Right lobe of liver (tissue), 6 donors: ENCODE measurements at regions of chr2 and their contacts with region 1.

Region 1: GRCh38 chr2:38720613-38721241 is 30.4 kb downstream of the SRSF7 start:
- DNase-seq: peak in 2 of 3 donors; percentile 63 to 65
- ATAC-seq: peak; percentile 11 to 62 (median 36)
- H3K4me3 ChIP-seq: no peak overlapping the region
- H3K27ac ChIP-seq: peak overlapping the region in 1 of 3 donors; percentile 36
- H3K4me1 ChIP-seq: peaks cover 0 to 31% (median 9%) of the 10 kb centered on the region in 4 donors
- H3K27me3 ChIP-seq: no peaks in the 10 kb centered on the region
- CTCF ChIP-seq: no peak
- POLR2A ChIP-seq: no peak

Region 2: DNA sequence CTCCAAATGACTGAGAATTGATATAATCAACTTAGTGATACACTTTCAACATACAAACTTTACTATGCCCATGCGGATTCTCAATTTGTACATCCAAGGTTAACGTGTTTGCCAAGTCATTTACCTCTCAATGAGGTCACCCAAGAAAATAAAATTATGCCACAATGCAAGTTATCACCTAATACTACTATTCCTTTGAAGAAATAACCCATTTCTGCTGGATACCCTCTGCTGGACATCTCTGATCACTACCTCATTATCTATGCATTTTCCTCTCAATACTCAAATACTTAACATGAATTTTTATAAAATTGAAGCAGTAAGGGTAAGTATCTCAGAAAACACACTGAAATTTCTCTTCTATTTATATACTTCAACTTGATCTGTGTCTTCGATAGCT is 130.7 kb before region 1 on chr2:
- intact Hi-C with region 1: loop called in 1 of 2 experiments (anchors 10 kb)
- DNase-seq: no peak
- ATAC-seq: no peak
- H3K4me3 ChIP-seq: no peak overlapping the region
- H3K27ac ChIP-seq: no peak overlapping the region
- H3K4me1 ChIP-seq: no peaks in the 10 kb centered on the region
- H3K27me3 ChIP-seq: no peaks in the 10 kb centered on the region
- CTCF ChIP-seq: no peak
- POLR2A ChIP-seq: no peak

Region 3: GRCh38 chr2:38610851-38611801 is 109.6 kb before region 1 on chr2:
- intact Hi-C with region 1: no loop called
- DNase-seq: no peak
- ATAC-seq: peak; percentile 46 to 80 (median 54)
- H3K4me3 ChIP-seq: no peak overlapping the region
- H3K27ac ChIP-seq: no peak overlapping the region
- H3K4me1 ChIP-seq: peaks cover 0 to 8% (median 0%) of the 10 kb centered on the region in 4 donors
- H3K27me3 ChIP-seq: no peaks in the 10 kb centered on the region
- CTCF ChIP-seq: no peak
- POLR2A ChIP-seq: no peak

Region 4: DNA sequence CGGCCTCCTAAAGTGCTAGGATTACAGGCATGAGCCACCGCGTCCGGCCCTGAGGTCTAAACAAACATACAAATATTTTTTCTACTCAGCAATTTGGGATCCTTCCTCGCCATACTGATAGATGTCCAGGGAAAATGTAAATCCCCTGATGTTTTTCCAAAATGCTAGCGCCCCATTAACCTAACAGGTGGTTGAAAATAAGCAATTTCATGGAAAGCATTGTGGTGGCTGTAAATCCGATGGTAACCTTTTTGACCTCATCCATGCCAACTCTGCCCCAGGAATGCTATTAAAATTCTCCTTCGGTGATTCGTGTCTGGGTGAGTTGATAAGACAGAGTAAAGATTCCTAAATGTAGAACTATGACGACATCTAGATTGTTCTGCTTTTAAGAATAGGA is 76.5 kb after region 1 on chr2:
- intact Hi-C with region 1: no loop called
- DNase-seq: no peak
- ATAC-seq: no peak
- H3K4me3 ChIP-seq: no peak overlapping the region
- H3K27ac ChIP-seq: peak overlapping the region in 1 of 3 donors; percentile 66
- H3K4me1 ChIP-seq: peaks cover 0 to 30% (median 12%) of the 10 kb centered on the region in 4 donors
- H3K27me3 ChIP-seq: no peaks in the 10 kb centered on the region
- CTCF ChIP-seq: no peak
- POLR2A ChIP-seq: no peak